Activated B cell treated with CpG ODN at 0.5 μM for 24 hours (primary cell): ENCODE measurements at regions of chr13 and their contacts with region 1.

Region 1: DNA sequence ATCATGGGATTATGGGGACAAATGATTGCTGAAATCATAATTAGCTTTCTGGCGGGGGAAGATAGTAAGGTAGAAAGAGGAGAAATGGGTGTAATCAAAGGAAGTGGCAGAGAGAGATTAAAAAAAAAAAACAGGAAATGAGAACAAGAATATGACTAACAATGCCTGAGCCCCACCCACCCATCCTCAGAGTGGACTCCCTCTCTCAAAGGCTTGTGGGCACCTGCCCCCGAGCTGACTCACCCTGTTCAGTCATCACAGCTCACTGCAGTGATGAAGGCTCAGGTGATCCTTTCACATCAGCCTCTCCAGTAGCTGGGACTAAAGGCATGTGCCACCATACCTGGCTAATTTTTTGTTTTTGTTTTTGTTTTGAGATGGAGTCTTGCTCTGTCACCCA is 26.4 kb upstream of the TPT1 start:
- DNase-seq: peak; percentile 56
- ATAC-seq: peak; percentile 100
- H3K4me3 Mint-ChIP-seq: peak overlapping the region; percentile 39
- H3K27ac Mint-ChIP-seq: peak overlapping the region; percentile 82
- H3K4me1 Mint-ChIP-seq: peaks cover 32% of the 10 kb centered on the region
- H3K27me3 Mint-ChIP-seq: no peaks in the 10 kb centered on the region
- CTCF ChIP-seq: no peak

Region 2: GRCh38 chr13:45393941-45394570 is 26.7 kb after region 1 on chr13:
- CTCF ChIA-PET with region 1: interaction called, 26 read pairs
- POLR2A ChIA-PET with region 1: interaction called, 6 read pairs
- intact Hi-C with region 1: loop called (anchors 1 kb)
- DNase-seq: no peak
- ATAC-seq: peak; percentile 74
- H3K4me3 Mint-ChIP-seq: no peak overlapping the region
- H3K27ac Mint-ChIP-seq: no peak overlapping the region
- H3K4me1 Mint-ChIP-seq: no peaks in the 10 kb centered on the region
- H3K27me3 Mint-ChIP-seq: no peaks in the 10 kb centered on the region
- CTCF ChIP-seq: no peak

Region 3: DNA sequence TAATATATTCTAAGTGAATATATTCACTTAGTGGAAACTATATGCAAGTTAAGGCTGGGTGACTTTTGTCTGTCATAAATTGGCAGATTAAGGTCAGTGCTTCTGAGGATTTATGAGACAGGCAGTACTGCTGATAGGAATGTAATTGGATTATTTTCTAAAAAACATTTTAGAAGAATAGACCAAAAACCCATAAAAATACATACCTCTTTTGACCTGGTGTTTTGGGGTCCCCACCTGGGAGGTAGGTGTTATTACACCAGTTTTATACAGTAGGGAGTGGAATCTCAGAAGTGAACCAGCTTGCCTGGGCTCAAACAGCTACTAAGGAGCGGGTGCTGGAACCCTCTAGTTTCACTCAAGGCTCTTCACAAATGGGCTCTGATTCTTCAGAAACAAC is 122.7 kb after region 1 on chr13:
- CTCF ChIA-PET with region 1: interaction called, 7 read pairs
- POLR2A ChIA-PET with region 1: no interaction called
- intact Hi-C with region 1: loop called (anchors 1 kb)
- DNase-seq: no peak
- ATAC-seq: peak; percentile 47
- H3K4me3 Mint-ChIP-seq: no peak overlapping the region
- H3K27ac Mint-ChIP-seq: no peak overlapping the region
- H3K4me1 Mint-ChIP-seq: no peaks in the 10 kb centered on the region
- H3K27me3 Mint-ChIP-seq: no peaks in the 10 kb centered on the region
- CTCF ChIP-seq: no peak